ENCODE measurements at regions of chr13 and their contacts with region 1.

Region 1: DNA sequence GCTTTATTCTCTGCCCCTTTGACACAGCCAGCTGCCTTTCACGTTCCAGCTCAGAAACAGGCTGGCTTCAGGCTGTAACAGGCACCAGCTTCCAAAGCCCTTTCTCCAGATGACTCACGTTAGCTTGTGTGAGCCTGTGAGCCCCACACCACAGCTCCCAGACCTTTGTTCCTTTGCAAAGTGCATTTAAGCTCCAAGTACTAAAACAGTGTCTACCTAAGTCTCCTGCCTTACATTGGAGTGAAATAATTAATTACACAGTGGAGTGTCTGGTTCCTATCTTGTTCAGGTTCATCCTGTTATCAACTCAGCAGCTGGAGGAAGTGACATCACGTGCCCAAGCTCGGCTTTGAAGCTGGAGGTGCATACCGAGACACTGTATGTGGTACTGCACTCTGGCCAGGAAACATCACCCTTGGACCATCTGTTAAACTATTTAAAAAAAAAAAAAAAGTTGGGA is 475.8 kb downstream of the FOXO1 start:
- DNase-seq: peak; percentile 90
- H3K4me3 Mint-ChIP-seq: peak overlapping the region; percentile 83
- H3K27ac Mint-ChIP-seq: peak overlapping the region; percentile 92
- H3K4me1 Mint-ChIP-seq: peaks cover 64% of the 10 kb centered on the region
- H3K27me3 Mint-ChIP-seq: no peaks in the 10 kb centered on the region

Region 2: GRCh38 chr13:40069173-40070044 is 121.3 kb before region 1 on chr13:
- intact Hi-C with region 1: loop called (anchors 5 kb)
- DNase-seq: peak; percentile 90
- H3K4me3 Mint-ChIP-seq: no peak overlapping the region
- H3K27ac Mint-ChIP-seq: no peak overlapping the region
- H3K4me1 Mint-ChIP-seq: peaks cover 25% of the 10 kb centered on the region
- H3K27me3 Mint-ChIP-seq: no peaks in the 10 kb centered on the region

Region 3: GRCh38 chr13:40132249-40132648 is 58.4 kb before region 1 on chr13:
- intact Hi-C with region 1: loop called (anchors 1 kb)
- DNase-seq: peak; percentile 85
- H3K4me3 Mint-ChIP-seq: no peak overlapping the region
- H3K27ac Mint-ChIP-seq: peak overlapping the region; percentile 78
- H3K4me1 Mint-ChIP-seq: peaks cover 43% of the 10 kb centered on the region
- H3K27me3 Mint-ChIP-seq: no peaks in the 10 kb centered on the region

Region 4: GRCh38 chr13:40149611-40150274 is 40.9 kb before region 1 on chr13:
- intact Hi-C with region 1: loop called (anchors 2 kb)
- DNase-seq: no peak
- H3K4me3 Mint-ChIP-seq: no peak overlapping the region
- H3K27ac Mint-ChIP-seq: peak overlapping the region; percentile 42
- H3K4me1 Mint-ChIP-seq: peaks cover 49% of the 10 kb centered on the region
- H3K27me3 Mint-ChIP-seq: no peaks in the 10 kb centered on the region

Region 5: DNA sequence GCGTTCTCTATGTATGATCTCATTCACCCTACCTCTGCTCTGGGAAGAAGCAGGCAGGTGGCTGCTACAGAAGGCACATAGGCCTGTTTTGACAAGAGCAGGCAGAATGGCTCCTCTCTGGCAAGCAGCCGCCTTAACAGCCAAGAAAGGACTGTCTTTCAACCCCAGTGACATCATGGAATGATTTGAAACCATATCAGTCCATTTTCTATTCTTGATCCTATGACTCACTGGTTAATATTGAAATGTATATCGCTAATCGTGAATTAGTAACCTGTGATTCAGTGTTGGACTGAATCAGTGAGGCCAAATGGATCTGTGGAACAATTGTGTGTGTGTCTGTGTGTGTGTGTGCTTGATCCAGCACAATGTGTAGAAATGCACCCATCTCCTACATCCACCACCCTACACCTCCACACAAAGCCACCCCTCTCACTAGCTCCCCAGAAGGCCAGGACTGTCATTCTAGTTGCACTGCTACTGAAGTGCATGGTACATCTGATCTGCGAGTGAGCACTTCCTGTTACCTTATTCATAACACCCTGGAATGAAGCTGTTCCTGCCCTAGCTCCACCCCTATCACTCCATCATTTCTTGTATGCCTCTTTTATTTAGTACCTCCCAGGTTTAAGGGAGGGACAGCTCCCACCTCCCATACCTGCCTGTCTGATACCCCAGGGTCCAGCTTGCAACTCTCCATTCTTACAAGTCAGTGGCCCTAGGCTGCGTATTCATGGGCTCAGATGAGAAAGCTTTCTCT is 15.8 kb after region 1 on chr13:
- intact Hi-C with region 1: loop called (anchors 2 kb)
- DNase-seq: peak; percentile 80
- H3K4me3 Mint-ChIP-seq: peak overlapping the region; percentile 63
- H3K27ac Mint-ChIP-seq: peak overlapping the region; percentile 97
- H3K4me1 Mint-ChIP-seq: peaks cover 37% of the 10 kb centered on the region
- H3K27me3 Mint-ChIP-seq: no peaks in the 10 kb centered on the region

Region 6: DNA sequence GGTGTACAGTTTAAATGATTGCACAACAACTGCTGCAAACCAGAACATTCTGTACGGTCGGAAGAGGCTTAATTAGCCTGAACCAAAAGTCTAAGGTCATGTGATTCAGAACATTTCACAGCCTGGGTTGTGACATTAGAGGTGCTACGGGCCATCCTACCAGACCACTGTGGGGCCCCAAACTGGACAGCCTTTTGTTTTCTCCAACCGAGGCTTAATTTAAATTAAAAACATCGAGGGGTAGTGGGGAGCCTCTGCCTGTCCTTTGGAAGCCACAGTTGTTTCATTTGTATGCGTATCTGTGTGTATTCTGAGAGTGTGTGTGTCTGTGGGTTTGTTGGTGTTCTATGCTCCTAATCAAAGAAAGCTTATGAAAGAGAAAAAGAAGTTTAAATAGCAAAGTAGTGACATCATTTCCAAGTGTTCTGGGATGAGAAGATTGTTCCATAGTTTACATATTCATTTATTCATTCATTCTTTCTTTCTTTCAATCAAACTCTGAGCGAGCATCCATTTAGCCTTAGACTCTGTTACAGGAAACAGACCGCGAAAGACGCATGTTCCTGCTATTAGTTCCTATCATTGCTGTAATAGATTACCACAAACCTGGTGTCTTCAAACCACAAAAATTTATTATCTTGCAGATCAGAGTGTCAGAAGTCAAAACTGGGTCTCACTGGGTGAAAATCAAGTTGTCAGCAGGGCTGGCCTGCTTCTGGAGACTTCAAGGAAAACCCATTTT is 31.0 kb after region 1 on chr13:
- intact Hi-C with region 1: loop called (anchors 5 kb)
- DNase-seq: peak; percentile 74
- H3K4me3 Mint-ChIP-seq: peak overlapping the region; percentile 49
- H3K27ac Mint-ChIP-seq: peak overlapping the region; percentile 45
- H3K4me1 Mint-ChIP-seq: peaks cover 36% of the 10 kb centered on the region
- H3K27me3 Mint-ChIP-seq: no peaks in the 10 kb centered on the region

Region 7: GRCh38 chr13:40247845-40248244 is 57.2 kb after region 1 on chr13:
- intact Hi-C with region 1: no loop called
- DNase-seq: no peak
- H3K4me3 Mint-ChIP-seq: no peak overlapping the region
- H3K27ac Mint-ChIP-seq: no peak overlapping the region
- H3K4me1 Mint-ChIP-seq: peaks cover 24% of the 10 kb centered on the region
- H3K27me3 Mint-ChIP-seq: no peaks in the 10 kb centered on the region

Region 8: DNA sequence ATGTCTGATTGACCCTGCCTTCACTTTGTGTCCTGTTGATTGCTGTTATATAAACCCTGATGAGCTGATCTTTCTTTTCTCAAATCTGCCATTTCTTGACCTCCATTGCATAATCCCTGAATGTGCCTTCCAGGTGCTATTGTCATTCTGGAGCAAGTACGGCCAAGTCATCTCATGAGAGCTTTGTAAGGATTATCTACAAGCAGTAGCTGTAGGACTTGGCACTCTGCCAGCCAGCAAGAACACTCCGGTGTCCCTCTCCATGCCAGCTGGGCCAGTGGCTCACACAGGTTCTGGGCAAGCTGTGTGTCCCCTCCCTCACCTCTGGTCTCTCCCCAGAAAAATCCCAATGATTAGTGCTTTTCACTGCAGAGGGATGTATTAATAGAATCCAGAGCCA is 127.7 kb after region 1 on chr13:
- intact Hi-C with region 1: loop called (anchors 5 kb)
- DNase-seq: no peak
- H3K4me3 Mint-ChIP-seq: no peak overlapping the region
- H3K27ac Mint-ChIP-seq: peak overlapping the region; percentile 47
- H3K4me1 Mint-ChIP-seq: peaks cover 58% of the 10 kb centered on the region
- H3K27me3 Mint-ChIP-seq: no peaks in the 10 kb centered on the region

Measured in activated CD4-positive, alpha-beta T cell treated with anti-CD3 and anti-CD28 coated beads, Interleukin-2, amount 10 ng/mL, durations not matched to agents 24 days and 14 days (primary cell).